ENCODE measurements at regions of chr19 and their contacts with region 1.

Region 1: GRCh38 chr19:6125571-6125989 is 9.9 kb upstream of the ACSBG2 start:
- DNase-seq: peak; percentile 68
- CTCF ChIP-seq: peak; percentile 82

Region 2: DNA sequence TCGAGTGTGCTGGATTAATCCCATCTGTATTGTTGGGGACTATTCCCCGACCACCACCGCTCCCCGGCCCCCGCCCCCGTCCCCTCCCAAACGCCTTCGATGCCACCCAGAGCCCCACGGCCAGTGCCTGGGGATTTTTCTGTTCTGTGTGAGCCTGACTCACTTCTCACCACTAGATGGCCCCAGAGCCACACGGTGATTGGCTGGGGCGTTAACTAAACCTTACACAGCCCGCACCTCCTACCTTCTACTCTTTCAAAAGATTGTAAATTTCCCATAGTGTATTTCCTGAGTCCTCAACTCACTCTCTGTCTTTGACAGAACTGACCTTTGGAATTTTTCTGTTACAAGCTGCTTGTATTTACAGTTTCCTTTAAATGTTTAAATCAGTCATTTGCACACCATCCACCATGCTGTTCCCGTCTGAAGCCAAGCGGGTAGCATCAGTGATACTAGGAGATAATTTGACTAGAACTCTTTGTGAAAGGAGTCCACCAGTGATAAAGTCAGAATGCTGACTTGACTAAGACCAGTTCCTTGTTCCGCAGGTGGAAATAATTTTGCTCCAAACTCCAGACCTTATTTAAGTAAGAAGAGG is 76.7 kb before region 1 on chr19:
- in situ Hi-C with region 1: loop called (anchors 5 kb)
- DNase-seq: peak; percentile 92
- CTCF ChIP-seq: peak; percentile 91

Region 3: DNA sequence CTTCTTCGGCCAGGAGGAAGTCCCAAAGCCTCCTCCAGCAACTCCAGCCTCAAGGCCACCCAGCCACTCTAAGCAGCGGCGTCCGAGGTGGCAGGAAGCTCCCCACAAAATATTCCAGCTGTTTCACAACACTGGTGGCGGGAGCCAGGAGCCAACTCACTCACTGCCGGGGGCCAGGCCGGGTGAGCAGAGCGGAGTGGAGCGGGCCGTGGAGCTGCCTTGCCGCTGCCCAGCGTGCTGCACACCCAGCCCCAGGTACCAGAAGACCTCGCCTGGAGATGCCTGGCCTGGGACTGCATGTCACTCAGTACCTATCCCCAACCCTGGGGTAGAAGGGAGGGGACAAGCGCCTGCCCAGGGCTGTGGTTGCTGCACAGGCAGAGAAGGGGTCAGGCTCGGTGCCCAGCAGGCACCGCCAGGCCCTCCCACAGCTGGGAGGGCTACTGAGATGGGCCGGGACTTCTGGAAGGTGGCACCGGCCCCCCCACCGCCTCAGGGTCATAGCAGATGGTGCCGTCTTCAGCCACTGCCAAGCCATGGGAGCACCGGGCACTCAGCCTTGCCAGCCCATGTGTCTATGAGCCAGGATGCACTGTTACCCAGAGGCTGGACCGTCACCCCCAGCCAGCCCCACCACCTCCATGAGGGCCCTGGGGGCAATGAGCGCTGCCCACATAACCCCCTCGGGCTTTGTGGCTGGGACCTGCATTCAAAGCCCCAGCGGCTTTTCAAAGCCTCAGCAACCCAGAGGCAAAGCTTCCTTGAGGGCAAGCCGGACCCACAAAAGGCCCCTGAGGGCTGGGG is 95.0 kb after region 1 on chr19:
- in situ Hi-C with region 1: no loop called
- DNase-seq: no peak
- CTCF ChIP-seq: no peak

Region 4: DNA sequence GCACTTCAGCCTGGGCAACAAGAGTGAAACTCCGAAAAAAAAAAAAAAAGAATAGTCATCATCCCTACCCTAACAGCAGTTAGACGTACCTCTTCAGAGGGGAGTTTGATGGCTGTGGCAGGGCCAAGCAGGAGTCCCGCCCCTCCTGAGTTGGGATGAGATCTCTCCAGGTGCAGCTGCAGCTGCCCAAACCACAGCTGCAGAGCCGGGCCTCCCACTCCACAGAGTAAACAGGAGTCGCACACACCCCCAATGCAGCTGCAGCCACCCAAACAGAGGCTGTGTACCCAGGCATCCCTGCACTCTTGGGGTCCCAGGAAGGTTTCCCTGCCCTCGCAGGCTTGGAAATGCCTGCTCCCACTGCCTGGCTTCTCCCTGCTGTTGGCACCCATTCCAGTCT is 171.6 kb after region 1 on chr19:
- in situ Hi-C with region 1: no loop called
- DNase-seq: no peak
- CTCF ChIP-seq: no peak